ENCODE measurements at regions of chr2 and their contacts with region 1.

Region 1: DNA sequence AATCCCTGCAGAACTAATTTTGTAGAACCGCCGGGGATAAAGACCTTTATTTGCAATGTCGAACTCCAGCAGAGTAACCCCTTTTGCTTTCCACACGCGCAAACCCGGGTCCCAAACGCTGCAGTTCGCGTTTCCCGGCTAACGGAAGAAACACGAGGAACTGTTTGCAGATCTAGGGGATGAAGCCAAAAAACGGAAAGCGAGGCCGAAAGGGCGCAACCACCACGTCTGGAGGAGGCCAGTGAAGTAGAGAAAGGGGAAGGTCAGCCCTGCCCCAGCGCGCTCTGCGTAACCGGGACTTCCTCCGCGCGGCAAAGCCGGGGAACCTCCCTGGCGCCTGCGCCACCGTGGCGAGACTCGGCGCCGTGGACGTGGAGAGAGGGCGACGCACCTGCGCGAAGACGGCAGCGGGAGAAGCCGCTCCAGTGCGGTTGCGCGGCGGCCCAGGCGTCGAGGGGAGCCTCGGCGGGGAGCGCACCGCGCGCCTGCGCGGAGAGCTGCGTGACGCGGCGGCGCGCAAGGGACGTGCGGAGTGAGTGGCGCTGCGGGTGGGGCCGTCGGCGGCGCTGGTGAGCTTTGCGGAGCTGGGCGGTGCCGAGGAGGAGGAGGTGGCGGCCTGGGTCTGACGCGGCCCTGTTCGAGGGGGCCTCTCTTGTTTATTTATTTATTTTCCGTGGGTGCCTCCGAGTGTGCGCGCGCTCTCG is at the start of gene PPP1CB:
- DNase-seq: peak; percentile 97
- H3K4me3 ChIP-seq: peak within 1 kb of the TSS; percentile 99 to 100
- H3K27ac ChIP-seq: peak within 1 kb of the TSS; percentile 100
- H3K4me1 ChIP-seq: peaks cover 57% of the 10 kb centered on the region
- H3K27me3 ChIP-seq: no peaks in the 10 kb centered on the region
- CTCF ChIP-seq: peak; percentile 18 to 28 (median 21)
- POLR2A ChIP-seq: peak; percentile 17
- total RNA-seq, gene PPP1CB: 175 to 204 TPM

Region 2: GRCh38 chr2:28594289-28595108 is 156.9 kb before region 1 on chr2:
- intact Hi-C with region 1: loop called (anchors 10 kb)
- DNase-seq: peak; percentile 96
- H3K4me3 ChIP-seq: no peak overlapping the region
- H3K27ac ChIP-seq: peak overlapping the region; percentile 48 to 87
- H3K4me1 ChIP-seq: peaks cover 6% of the 10 kb centered on the region
- H3K27me3 ChIP-seq: no peaks in the 10 kb centered on the region
- CTCF ChIP-seq: peak; percentile 88 to 96 (median 89)
- POLR2A ChIP-seq: no peak

Region 3: DNA sequence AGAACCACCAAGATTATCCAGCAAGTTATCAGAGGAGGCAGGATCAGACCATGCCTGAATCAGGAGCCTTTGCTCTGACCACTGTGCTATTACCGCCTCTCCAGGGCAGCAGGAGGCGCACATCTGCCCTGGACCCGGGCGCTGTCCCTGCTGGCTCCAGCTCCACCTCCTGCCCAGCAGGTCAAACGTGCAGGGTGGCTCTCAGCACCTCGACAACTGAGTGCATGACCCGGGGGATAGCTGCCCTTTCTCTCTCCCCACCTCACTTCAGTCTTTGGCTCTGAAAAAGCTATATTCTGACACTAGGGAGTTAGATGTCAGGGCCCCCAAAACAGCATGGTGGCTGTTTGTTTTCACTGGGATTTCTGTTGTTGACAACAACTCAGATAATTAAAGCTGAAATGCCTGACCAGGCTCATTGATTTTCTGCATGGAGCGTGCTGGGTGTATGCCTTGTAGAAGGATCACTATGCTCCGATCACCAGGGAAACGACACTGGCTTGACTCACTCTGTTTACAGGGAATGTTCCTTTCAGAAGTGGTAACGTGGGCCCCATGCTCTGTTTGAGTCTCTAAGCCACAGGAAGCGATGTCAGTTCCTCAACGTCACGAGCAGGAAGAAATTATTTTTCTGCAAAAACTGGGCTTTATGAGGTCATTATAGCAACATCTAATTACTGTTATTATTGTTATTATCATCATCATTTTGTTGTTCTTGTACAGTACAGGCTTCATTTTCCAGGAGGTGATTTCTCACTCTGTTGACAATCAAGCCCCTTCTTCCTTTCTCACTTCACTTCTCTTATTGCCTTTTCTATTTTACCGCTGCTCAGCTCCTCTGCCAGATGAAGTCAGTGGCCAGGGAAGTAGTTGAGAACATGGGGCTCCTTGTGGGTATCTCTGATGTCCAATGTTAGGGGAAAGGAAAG is 130.0 kb before region 1 on chr2:
- intact Hi-C with region 1: loop called (anchors 10 kb)
- DNase-seq: peak; percentile 88
- H3K4me3 ChIP-seq: no peak overlapping the region
- H3K27ac ChIP-seq: peak overlapping the region; percentile 71 to 90
- H3K4me1 ChIP-seq: peaks cover 43% of the 10 kb centered on the region
- H3K27me3 ChIP-seq: no peaks in the 10 kb centered on the region
- CTCF ChIP-seq: peak in 1 of 3 experiments; percentile 16
- POLR2A ChIP-seq: no peak

Region 4: GRCh38 chr2:28661589-28662001 is 89.8 kb before region 1 on chr2:
- intact Hi-C with region 1: loop called (anchors 5 kb)
- DNase-seq: peak; percentile 77
- H3K4me3 ChIP-seq: no peak overlapping the region
- H3K27ac ChIP-seq: peak overlapping the region; percentile 70 to 84
- H3K4me1 ChIP-seq: peaks cover 44% of the 10 kb centered on the region
- H3K27me3 ChIP-seq: no peaks in the 10 kb centered on the region
- CTCF ChIP-seq: no peak
- POLR2A ChIP-seq: no peak